ENCODE measurements at regions of chr7 and their contacts with region 1.

Region 1: GRCh38 chr7:36291387-36292316 is 98.0 kb upstream of the ANLN start:
- DNase-seq: peak; percentile 82
- ATAC-seq: peak; percentile 82
- H3K4me3 ChIP-seq: peak overlapping the region; percentile 3 to 15; a peak in 2 of 4 replicates
- H3K27ac ChIP-seq: peak overlapping the region; percentile 99
- H3K4me1 ChIP-seq: peaks cover 55% of the 10 kb centered on the region
- H3K27me3 ChIP-seq: no peaks in the 10 kb centered on the region
- CTCF ChIP-seq: peak; percentile 97

Region 2: DNA sequence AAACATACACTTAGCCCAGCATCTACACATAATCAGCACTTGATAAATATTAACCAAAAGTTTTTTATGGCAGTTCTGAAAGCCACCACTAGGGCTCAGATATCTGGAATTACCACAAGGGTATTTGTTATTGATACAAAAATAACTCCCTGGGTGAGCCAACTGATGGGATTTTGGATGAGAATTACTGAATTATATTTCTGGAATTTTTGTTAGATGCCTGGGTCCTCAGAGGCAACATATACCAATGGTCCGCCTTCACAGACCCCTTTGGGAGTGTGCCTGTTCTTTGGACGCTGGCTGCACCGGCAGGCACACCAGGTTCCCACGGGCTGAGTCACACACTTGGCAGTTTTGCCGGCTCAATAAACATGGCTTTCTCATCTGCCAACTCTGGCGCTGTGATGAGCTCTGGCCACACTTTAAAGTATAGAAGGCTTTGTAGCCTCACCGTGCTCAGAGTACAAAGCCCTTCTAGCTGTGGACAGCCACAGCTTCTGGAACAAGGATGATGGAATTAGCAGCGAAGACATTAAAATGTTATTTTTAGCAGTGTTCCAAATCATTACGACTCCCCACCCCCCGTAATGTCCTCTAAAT is 163.1 kb before region 1 on chr7:
- CTCF ChIA-PET with region 1: interaction called, 4 read pairs
- POLR2A ChIA-PET with region 1: no interaction called
- in situ Hi-C with region 1: no loop called
- intact Hi-C with region 1: loop called (anchors 1 kb)
- DNase-seq: peak; percentile 89
- ATAC-seq: peak; percentile 95
- H3K4me3 ChIP-seq: peak overlapping the region; percentile 19 to 57
- H3K27ac ChIP-seq: peak overlapping the region; percentile 78
- H3K4me1 ChIP-seq: peaks cover 25% of the 10 kb centered on the region
- H3K27me3 ChIP-seq: no peaks in the 10 kb centered on the region
- CTCF ChIP-seq: peak; percentile 86

Region 3: DNA sequence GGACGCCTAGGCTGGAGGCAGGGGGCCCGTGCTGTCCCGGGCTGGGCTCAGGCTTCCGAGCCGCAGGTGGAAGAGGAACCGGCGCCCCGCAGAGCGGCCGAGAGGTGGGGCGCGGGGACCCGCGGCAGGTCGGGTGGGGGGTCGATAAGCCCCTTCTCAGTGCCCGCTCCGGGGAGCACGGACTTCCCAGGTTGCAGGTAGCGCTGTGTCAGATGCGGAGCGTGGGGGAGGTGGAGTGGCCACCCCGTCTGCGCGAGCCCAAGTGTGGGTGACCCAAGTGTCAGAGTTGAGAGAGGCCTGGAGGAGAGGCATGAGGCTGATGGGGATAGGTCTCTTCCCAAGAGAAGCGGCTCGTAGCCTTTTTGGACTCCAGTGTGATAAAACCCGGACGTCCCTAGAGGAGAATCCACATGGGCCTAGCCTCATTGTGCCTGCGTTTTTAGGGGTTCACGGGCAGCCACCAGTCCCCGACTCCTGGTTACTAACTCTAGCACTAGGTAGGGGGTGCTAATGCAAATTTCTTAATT is 138.0 kb before region 1 on chr7:
- CTCF ChIA-PET with region 1: interaction called, 6 read pairs
- POLR2A ChIA-PET with region 1: no interaction called
- in situ Hi-C with region 1: no loop called
- intact Hi-C with region 1: loop called (anchors 1 kb)
- DNase-seq: no peak
- ATAC-seq: peak; percentile 1; the same call in 1 of the 2 replicates
- H3K4me3 ChIP-seq: peak overlapping the region; percentile 78 to 96
- H3K27ac ChIP-seq: peak overlapping the region; percentile 91
- H3K4me1 ChIP-seq: peaks cover 28% of the 10 kb centered on the region
- H3K27me3 ChIP-seq: no peaks in the 10 kb centered on the region
- CTCF ChIP-seq: no peak